SK-N-SH (cell line): ENCODE measurements at regions of chr7 and their contacts with region 1.

Region 1: DNA sequence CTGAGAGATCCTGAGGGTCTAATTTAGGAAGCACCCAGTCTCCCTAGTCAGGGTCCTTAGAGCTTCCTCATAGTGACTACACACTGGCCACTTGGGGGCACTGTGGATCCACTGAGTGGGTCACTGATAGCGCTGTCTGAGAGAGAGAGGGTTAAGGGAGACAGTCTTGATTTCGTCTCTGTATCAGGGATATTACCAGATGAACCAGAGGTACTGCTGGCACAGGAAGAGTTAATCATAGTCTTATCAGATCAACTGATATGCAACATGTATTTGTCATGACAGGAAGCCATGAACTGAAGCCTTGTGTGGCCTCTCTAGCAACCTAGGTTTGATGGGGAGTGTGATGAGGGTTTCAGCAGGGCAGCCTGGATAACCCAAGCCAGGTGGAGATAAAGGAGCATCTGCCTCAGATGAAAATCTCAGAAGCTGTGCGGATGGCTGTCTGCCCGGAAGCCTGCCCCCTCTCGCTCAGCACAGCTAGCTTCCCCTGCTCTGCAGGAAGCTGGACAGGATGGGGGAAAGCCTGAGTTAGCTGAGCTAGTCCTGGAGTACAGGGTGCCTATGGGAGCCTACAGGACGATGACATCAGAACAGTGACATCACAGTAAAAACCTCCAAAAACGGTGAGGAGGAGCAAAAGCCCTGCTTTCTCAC is 214.0 kb upstream of the PRSS1 start:
- DNase-seq: peak; percentile 80
- H3K4me3 ChIP-seq: peak overlapping the region; percentile 2 to 10; a peak in 3 of 4 replicates
- H3K27ac ChIP-seq: peak overlapping the region; percentile 14 to 99; a peak in 3 of 4 replicates
- H3K4me1 ChIP-seq: peaks cover 12 to 28% of the 10 kb centered on the region in 2 experiments; a peak in 3 of 4 replicates
- H3K27me3 ChIP-seq: no peaks in the 10 kb centered on the region
- CTCF ChIP-seq: peak; percentile 100
- EP300 ChIP-seq: peak; percentile 95 to 99
- RAD21 ChIP-seq: peak; percentile 100

Region 2: GRCh38 chr7:142319970-142320369 is 215.3 kb before region 1 on chr7:
- CTCF ChIA-PET with region 1: no interaction called
- POLR2A ChIA-PET with region 1: no interaction called
- DNase-seq: no peak
- H3K4me3 ChIP-seq: no peak overlapping the region
- H3K27ac ChIP-seq: no peak overlapping the region
- H3K4me1 ChIP-seq: no peaks in the 10 kb centered on the region
- H3K27me3 ChIP-seq: peaks cover 17% of the 10 kb centered on the region; the same call in 1 of the 2 replicates
- CTCF ChIP-seq: peak; percentile 50
- EP300 ChIP-seq: no peak
- RAD21 ChIP-seq: 0 out of 2 replicates have a peak, but pooled peaks have one; percentile 13

Region 3: GRCh38 chr7:142385491-142386340 is 149.5 kb before region 1 on chr7:
- CTCF ChIA-PET with region 1: no interaction called
- POLR2A ChIA-PET with region 1: no interaction called
- DNase-seq: peak; percentile 62
- H3K4me3 ChIP-seq: no peak overlapping the region
- H3K27ac ChIP-seq: no peak overlapping the region
- H3K4me1 ChIP-seq: peaks cover 0 to 15% of the 10 kb centered on the region in 2 experiments; a peak in 1 of 4 replicates
- H3K27me3 ChIP-seq: no peaks in the 10 kb centered on the region
- CTCF ChIP-seq: peak; percentile 87
- EP300 ChIP-seq: no peak
- RAD21 ChIP-seq: peak; percentile 65

Region 4: GRCh38 chr7:142459551-142459963 is 75.7 kb before region 1 on chr7:
- CTCF ChIA-PET with region 1: interaction called, 23 read pairs
- POLR2A ChIA-PET with region 1: no interaction called
- DNase-seq: peak; percentile 64
- H3K4me3 ChIP-seq: no peak overlapping the region; a peak in 1 of 4 replicates
- H3K27ac ChIP-seq: no peak overlapping the region
- H3K4me1 ChIP-seq: peaks cover 5 to 10% of the 10 kb centered on the region in 2 experiments; a peak in 2 of 4 replicates
- H3K27me3 ChIP-seq: no peaks in the 10 kb centered on the region
- CTCF ChIP-seq: peak; percentile 93
- EP300 ChIP-seq: no peak
- RAD21 ChIP-seq: peak; percentile 77

Region 5: DNA sequence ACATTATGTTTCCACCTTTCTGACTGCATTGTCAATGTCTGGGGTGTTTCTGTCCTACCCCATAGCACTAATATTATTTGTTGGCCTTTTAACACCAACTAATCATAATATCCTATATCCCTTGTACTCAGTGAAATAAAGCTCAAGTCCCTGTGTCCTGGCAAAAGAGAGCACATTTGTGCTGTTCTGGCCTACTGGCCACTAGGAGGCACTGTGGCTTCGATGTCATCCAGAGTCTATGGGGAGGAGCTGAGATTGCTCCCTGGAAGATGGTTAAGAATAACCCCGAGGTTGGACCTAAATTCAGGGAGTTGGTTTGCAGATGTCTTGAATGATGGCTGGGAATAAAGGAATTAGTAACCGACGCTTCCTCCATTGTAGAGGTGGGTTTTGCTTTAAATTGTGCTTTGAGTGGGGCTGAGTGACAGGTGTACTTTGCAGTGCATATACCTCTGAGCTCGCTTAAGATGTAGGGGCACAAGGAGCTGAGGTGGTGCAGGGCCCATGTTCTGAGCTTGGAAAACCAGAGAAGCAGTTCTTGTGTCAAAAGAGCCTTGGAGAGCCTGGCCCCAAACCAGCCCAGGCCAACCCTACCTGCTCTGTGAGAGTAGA is 22.8 kb after region 1 on chr7:
- CTCF ChIA-PET with region 1: interaction called, 32 read pairs
- POLR2A ChIA-PET with region 1: no interaction called
- DNase-seq: peak; percentile 51
- H3K4me3 ChIP-seq: no peak overlapping the region
- H3K27ac ChIP-seq: peak overlapping the region; percentile 69 to 72; a peak in 3 of 4 replicates
- H3K4me1 ChIP-seq: peaks cover 15 to 48% of the 10 kb centered on the region in 2 experiments
- H3K27me3 ChIP-seq: no peaks in the 10 kb centered on the region
- CTCF ChIP-seq: peak; percentile 97
- EP300 ChIP-seq: no peak
- RAD21 ChIP-seq: peak; percentile 45

Region 6: GRCh38 chr7:142603870-142604448 is 68.7 kb after region 1 on chr7:
- CTCF ChIA-PET with region 1: interaction called, 221 read pairs
- POLR2A ChIA-PET with region 1: interaction called, 6 read pairs
- DNase-seq: peak; percentile 81
- H3K4me3 ChIP-seq: peak overlapping the region; percentile 6 to 7; a peak in 2 of 4 replicates
- H3K27ac ChIP-seq: no peak overlapping the region
- H3K4me1 ChIP-seq: peaks cover 0 to 5% of the 10 kb centered on the region in 2 experiments; a peak in 2 of 4 replicates
- H3K27me3 ChIP-seq: no peaks in the 10 kb centered on the region
- CTCF ChIP-seq: peak; percentile 99
- EP300 ChIP-seq: no peak
- RAD21 ChIP-seq: peak; percentile 100

Region 7: DNA sequence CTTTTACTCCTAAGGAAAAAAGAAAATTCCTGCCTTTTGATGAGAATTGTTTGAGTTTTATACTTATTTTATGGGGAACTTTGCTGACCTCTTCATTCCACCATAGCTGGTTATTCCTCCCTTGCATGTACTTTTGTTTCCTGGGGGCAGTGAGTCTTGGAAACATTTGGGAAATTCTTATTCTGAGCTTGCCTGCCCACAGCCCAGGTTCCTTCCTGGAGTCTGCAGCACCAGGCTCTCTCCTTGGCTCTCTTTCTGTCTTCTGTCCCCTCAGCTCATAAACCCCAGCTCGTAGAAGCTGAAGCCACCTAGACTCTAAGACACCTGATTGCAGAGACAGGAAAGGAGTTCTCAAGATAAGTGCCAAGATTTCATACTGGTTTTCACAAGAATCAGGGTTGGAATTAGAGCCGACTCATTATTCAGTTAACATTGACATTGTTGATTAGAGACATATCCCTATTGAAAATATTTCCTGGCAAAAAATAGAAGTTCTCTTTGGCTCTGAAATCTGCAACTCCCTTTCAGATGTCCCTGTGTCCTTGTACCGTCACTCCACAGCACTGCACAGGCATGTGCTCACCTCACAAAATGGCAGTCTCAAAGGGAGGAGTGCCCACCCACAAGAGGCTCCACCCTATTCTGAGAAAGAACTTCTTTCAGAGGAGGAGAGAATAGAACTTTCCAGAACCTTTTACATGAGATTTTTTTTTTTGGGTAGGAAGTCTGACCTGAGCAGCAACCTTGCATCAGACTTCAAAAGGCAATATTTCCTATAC is 146.3 kb after region 1 on chr7:
- CTCF ChIA-PET with region 1: interaction called, 10 read pairs
- POLR2A ChIA-PET with region 1: no interaction called
- DNase-seq: no peak
- H3K4me3 ChIP-seq: no peak overlapping the region
- H3K27ac ChIP-seq: no peak overlapping the region
- H3K4me1 ChIP-seq: no peaks in the 10 kb centered on the region
- H3K27me3 ChIP-seq: no peaks in the 10 kb centered on the region
- CTCF ChIP-seq: no peak
- EP300 ChIP-seq: no peak
- RAD21 ChIP-seq: no peak

Region 8: DNA sequence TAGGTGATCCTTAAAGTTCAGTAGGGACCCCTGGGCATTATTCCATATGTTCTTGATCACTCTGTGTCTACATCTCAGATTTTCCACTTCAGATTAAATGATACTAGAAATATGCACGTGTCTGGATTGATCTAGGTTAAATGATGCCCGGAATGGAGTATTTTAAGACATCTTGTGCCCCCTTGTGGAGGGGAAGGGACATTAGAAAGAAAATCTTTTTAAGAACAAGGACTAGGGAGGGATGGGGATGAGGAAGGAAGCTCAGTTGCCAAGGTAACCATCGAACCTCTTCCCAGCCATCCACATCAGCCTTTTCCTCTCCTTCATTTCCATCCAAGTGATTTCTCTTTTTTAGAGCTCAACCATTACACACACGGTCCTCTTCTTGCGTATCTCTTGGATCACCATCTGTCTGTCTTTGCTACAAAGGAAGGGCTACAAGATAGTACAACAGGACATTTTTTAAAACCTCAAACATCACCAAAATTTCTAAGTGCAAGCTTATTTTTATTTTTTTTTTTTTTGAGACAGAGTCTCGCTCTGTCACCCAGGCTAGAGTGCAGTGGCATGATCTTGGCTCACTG is 276.0 kb after region 1 on chr7:
- CTCF ChIA-PET with region 1: interaction called, 52 read pairs
- POLR2A ChIA-PET with region 1: no interaction called
- DNase-seq: peak; percentile 59
- H3K4me3 ChIP-seq: no peak overlapping the region; a peak in 1 of 4 replicates
- H3K27ac ChIP-seq: no peak overlapping the region
- H3K4me1 ChIP-seq: peaks cover 27 to 33% of the 10 kb centered on the region in 2 experiments
- H3K27me3 ChIP-seq: peaks cover 10% of the 10 kb centered on the region; the same call in 1 of the 2 replicates
- CTCF ChIP-seq: peak; percentile 89
- EP300 ChIP-seq: no peak
- RAD21 ChIP-seq: peak; percentile 76

Region 9: GRCh38 chr7:143279186-143280098 is 744.2 kb after region 1 on chr7:
- CTCF ChIA-PET with region 1: no interaction called
- POLR2A ChIA-PET with region 1: no interaction called
- DNase-seq: no peak
- H3K4me3 ChIP-seq: no peak overlapping the region
- H3K27ac ChIP-seq: peak overlapping the region in 1 of 2 experiments; percentile 44; a peak in 2 of 4 replicates
- H3K4me1 ChIP-seq: peaks cover 3 to 9% of the 10 kb centered on the region in 2 experiments; a peak in 2 of 4 replicates
- H3K27me3 ChIP-seq: no peaks in the 10 kb centered on the region
- CTCF ChIP-seq: no peak
- EP300 ChIP-seq: no peak
- RAD21 ChIP-seq: no peak